ENCODE measurements at regions of chr17 and their contacts with region 1.

Region 1: DNA sequence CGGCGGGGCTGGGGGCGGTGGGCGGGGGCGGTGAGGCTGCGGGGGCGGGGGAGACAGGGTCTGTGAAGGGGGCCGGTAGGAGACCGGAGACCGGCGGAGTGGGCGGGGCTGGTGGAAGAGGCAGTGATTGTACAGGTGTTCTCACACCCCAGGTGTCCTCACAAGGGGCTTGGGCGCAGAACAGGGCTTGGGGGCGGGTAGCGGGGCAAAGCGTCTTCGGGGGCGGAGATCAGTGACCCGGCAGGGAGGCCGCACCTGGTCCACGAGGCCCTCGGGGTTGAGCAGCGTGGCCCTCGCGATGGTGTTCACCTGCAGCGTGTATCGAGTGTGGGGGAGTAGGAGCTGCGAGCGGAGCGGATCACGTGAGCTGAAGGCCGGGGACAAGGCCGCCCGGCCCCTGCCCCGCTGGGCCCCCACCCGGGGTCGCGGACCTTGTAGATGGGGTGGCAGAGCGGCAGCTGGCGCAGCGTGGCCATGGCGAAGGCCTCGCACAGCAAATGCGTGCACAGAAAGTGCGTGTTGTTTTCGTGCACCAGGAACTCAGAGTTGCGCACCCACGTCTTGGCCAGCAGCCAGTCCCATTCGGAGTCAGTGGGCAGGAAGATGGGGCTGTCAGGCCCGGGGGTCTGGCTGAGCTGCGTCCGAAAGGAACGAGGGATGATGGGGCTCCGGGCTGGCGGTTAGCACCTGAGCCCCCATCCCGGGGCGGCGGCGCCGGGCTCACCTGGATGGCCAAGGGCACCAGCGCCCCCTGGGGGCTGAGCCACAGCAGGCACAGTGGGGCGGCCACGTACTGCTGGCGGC is 8.5 kb downstream of the ALOXE3 start:
- DNase-seq: peak; percentile 80
- ATAC-seq: peak; percentile 99
- H3K4me3 Mint-ChIP-seq: no peak overlapping the region
- H3K27ac Mint-ChIP-seq: no peak overlapping the region
- H3K4me1 Mint-ChIP-seq: peaks cover 8% of the 10 kb centered on the region
- H3K27me3 Mint-ChIP-seq: peaks cover 37% of the 10 kb centered on the region

Region 2: DNA sequence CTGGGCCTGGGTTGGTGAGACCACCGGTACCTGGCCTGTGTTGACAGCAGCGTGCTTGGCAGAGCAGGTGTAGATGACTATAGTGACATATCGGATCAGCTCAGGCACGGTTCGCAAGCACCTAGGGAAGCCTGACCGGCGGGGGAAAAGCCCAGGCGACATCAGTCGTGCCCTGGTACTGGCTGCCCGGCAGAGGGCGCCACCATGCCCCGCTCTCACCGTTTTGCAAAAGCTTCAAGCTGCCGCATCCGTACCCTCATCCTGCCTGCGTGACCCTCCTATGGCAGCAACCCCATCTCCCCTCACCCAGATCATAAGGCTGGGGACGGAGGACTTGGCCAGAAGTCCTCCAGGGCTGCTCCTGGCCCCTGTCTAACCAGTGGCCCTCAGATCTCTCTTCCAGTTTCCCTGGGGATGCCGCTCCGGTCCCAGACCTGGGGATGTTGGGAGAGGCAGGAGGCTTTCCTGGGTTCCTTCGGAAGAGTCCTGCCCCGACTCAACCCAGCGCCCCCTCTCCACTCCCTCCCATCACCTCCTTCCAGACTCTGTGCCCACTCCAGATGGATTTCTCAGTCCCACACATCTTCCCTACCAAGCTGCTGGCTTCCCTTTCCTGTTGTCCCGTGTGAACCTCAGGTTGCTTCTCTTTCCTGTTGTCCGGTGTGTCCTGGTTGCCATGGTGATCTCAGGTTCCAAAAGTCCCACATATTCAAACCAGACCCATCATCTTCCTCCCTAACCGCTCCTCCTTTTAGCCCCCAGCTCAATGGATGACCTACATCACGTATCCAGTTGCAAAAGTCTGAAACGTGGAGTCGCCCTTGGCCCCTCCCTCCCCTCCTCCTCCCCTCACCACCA is 36.0 kb before region 1 on chr17:
- CTCF ChIA-PET with region 1: interaction called, 28 read pairs
- DNase-seq: peak; percentile 87
- ATAC-seq: peak; percentile 86
- H3K4me3 Mint-ChIP-seq: peak overlapping the region; percentile 37
- H3K27ac Mint-ChIP-seq: no peak overlapping the region
- H3K4me1 Mint-ChIP-seq: peaks cover 17% of the 10 kb centered on the region
- H3K27me3 Mint-ChIP-seq: peaks cover 61% of the 10 kb centered on the region

Region 3: DNA sequence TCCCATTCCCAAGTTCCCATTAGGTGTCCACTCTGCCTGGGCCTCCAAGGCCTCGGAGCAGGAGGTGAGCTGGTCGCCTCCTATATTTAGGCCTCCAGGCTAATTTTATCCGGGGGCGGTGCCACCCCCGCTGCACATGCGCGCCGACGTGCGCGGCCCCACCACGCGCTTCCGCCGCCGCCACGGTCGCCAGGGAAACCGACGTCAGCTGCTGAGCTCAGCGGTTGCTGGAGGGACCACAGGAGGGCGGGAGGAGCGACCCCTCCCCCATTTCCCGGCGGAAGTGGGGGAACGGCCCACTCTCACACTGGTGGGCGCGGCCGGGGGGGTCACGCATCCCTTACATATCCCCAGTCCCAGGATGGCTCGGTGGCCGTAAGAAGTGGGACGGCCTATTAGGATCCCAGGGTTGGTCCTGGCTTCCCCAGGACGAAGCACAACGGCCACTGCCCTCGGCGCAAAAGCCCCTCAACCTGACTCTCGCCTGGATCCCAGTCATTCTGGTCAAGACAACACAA is 41.3 kb after region 1 on chr17:
- CTCF ChIA-PET with region 1: no interaction called
- DNase-seq: peak; percentile 94
- ATAC-seq: peak; percentile 47
- H3K4me3 Mint-ChIP-seq: peak overlapping the region; percentile 90
- H3K27ac Mint-ChIP-seq: peak overlapping the region; percentile 91
- H3K4me1 Mint-ChIP-seq: peaks cover 21% of the 10 kb centered on the region
- H3K27me3 Mint-ChIP-seq: no peaks in the 10 kb centered on the region

Region 4: DNA sequence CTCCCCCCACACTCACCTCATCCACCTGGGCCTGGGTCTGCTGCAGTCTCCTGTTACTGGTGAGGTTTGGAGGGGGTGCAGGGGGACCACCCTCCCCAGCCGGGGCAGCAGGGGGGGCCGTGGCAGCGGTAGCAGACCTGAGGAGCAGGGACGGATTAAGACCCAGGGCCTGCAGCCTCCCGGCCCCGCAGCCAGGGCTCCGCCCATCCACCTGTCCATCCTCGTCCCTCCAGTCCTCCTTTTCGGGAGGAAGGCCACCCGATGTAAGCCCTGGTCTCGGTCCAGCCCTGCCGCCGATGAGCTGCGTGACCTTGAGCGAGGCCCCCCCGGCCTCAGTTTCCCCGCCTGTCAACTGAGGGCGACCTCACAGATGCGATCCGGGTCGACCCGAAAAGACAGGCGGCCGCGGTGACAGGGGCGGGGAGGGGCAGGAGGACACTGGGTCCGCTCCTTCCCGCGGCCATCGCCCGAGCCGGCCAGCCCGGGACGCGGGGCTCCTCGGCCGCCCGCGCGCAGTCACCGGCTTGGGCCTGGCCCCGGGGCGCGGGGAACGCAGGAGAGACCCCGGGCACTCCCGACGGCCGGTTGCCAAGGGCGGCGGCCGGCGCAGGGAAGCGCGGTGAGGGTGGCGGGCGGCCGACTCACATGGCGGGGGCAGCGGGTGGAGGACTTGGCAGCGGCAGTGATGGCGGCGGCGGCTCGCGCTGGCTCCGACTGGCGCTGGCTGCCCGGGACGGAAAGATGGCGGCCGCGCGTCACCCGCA is 52.6 kb after region 1 on chr17 and contains the start of gene VAMP2:
- CTCF ChIA-PET with region 1: no interaction called
- DNase-seq: peak; percentile 90
- ATAC-seq: peak; percentile 61
- H3K4me3 Mint-ChIP-seq: peak within 1 kb of the TSS; percentile 85
- H3K27ac Mint-ChIP-seq: peak within 1 kb of the TSS; percentile 99
- H3K4me1 Mint-ChIP-seq: peaks cover 57% of the 10 kb centered on the region
- H3K27me3 Mint-ChIP-seq: no peaks in the 10 kb centered on the region
- total RNA-seq, gene VAMP2: 47.6 to 68.9 TPM

Region 5: GRCh38 chr17:8221663-8222379 is 112.0 kb after region 1 on chr17:
- CTCF ChIA-PET with region 1: no interaction called
- DNase-seq: peak; percentile 93
- ATAC-seq: peak; percentile 59
- H3K4me3 Mint-ChIP-seq: peak overlapping the region; percentile 95
- H3K27ac Mint-ChIP-seq: peak overlapping the region; percentile 97
- H3K4me1 Mint-ChIP-seq: peaks cover 44% of the 10 kb centered on the region
- H3K27me3 Mint-ChIP-seq: no peaks in the 10 kb centered on the region